Activated naive CD4-positive, alpha-beta T cell treated with anti-CD3 and anti-CD28 coated beads for 36 hours (primary cell): ENCODE measurements at regions of chr2 and their contacts with region 1.

Region 1: DNA sequence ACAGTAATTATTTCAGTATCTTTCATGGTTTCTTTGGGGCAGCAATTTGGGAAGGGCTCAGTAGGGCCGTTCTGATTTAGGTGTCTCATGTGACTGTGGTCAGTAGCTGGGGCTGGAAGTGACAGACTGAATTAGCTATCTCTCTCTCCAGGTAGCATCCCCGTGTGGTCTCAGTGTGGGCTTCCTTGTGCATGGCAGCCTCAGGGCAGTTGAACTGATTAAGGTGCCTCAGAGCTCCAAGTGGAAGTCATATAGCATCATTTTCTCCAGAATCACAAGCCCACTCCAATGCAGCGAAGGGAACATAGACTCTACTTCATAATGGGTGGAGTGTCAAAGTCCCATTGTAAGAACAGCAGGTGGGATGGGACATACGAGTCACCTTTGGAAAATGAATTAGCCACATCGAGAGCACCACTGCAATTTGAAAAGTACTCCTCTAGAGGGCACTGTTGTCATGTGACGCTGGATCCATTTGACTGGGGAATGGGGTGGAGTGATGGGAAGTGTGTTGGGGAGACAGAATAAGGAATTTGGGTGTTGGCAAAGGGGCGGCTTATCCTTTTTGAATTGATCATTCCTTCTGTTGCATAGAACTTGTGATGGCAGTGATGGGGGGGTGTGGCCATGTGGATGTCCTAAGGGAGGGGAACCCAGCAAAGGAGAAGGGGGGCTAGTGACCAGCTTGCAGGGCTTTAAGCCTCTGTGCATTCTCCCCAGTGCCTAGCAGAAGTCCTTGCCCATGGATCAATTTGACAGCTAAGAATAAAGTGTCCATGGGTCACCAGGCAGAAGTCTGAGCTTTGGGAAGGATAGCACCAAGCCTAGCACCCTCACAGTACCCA is 39.3 kb upstream of the FAM136A start:
- DNase-seq: peak; percentile 60
- H3K4me3 Mint-ChIP-seq: no peak overlapping the region
- H3K27ac Mint-ChIP-seq: no peak overlapping the region
- H3K4me1 Mint-ChIP-seq: peaks cover 5% of the 10 kb centered on the region
- H3K27me3 Mint-ChIP-seq: no peaks in the 10 kb centered on the region

Region 2: GRCh38 chr2:70328921-70329561 is 12.1 kb before region 1 on chr2:
- CTCF ChIA-PET with region 1: interaction called, 19 read pairs
- intact Hi-C with region 1: no loop called
- DNase-seq: no peak
- H3K4me3 Mint-ChIP-seq: no peak overlapping the region
- H3K27ac Mint-ChIP-seq: no peak overlapping the region
- H3K4me1 Mint-ChIP-seq: no peaks in the 10 kb centered on the region
- H3K27me3 Mint-ChIP-seq: no peaks in the 10 kb centered on the region

Region 3: GRCh38 chr2:70616168-70616694 is 275.1 kb after region 1 on chr2:
- CTCF ChIA-PET with region 1: interaction called, 66 read pairs
- intact Hi-C with region 1: loop called (anchors 1 kb)
- DNase-seq: no peak
- H3K4me3 Mint-ChIP-seq: no peak overlapping the region
- H3K27ac Mint-ChIP-seq: no peak overlapping the region
- H3K4me1 Mint-ChIP-seq: no peaks in the 10 kb centered on the region
- H3K27me3 Mint-ChIP-seq: no peaks in the 10 kb centered on the region

Region 4: DNA sequence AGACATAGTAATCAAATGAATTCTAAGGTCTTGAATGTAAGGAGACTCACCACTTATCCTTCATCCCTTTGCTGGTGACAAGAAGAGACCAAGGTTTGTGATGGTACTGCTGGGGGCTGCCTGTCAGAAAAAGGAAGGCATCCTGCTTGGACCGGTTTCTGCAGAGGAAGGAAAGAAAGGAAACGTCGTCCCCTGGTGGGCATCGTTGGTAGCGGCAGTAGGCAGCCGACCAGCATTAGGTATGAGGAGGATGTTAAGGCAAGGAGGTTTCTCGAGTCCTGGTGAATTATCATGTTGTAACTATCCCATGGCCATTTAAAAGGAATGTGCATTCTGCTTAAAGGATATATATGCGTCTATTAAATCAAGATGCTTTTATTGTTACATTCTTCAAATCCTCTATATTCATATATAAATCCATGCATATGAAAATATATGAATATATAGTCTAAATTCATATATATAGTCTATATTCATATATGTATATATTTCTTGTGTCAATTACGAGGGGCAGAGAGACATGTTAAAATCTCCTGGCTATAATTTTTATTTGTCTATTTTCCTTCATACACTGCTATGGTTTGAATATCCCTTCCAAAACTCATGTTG is 306.8 kb after region 1 on chr2:
- CTCF ChIA-PET with region 1: interaction called, 15 read pairs
- intact Hi-C with region 1: loop called (anchors 1 kb)
- DNase-seq: peak; percentile 88
- H3K4me3 Mint-ChIP-seq: no peak overlapping the region
- H3K27ac Mint-ChIP-seq: no peak overlapping the region
- H3K4me1 Mint-ChIP-seq: no peaks in the 10 kb centered on the region
- H3K27me3 Mint-ChIP-seq: no peaks in the 10 kb centered on the region